H1 (cell line): ENCODE measurements at regions of chr19 and their contacts with region 1.

Region 1: GRCh38 chr19:4909897-4910593 is 744 bp downstream of the UHRF1 start:
- DNase-seq: peak; percentile 64 to 92
- H3K4me3 ChIP-seq: peak overlapping the region; percentile 46 to 83 (median 56)
- H3K27ac ChIP-seq: no peak overlapping the region; the same call in 1 of the 2 replicates
- H3K4me1 ChIP-seq: peaks cover 0 to 14% (median 11%) of the 10 kb centered on the region in 4 experiments; a peak in 6 of 7 replicates
- H3K27me3 ChIP-seq: no peaks in the 10 kb centered on the region; a peak in 2 of 7 replicates
- CTCF ChIP-seq: no peak
- EP300 ChIP-seq: no peak
- POLR2A ChIP-seq: no peak; a peak in 1 of 3 replicates
- RAD21 ChIP-seq: no peak

Region 2: GRCh38 chr19:4867534-4868285 is 42.3 kb before region 1 on chr19 and contains the start of gene PLIN3:
- CTCF ChIA-PET with region 1: interaction called, 111 read pairs
- POLR2A ChIA-PET with region 1: interaction called, 5 read pairs
- DNase-seq: peak; percentile 81 to 99
- H3K4me3 ChIP-seq: peak within 1 kb of the TSS; percentile 77 to 98 (median 84)
- H3K27ac ChIP-seq: peak within 1 kb of the TSS; percentile 46
- H3K4me1 ChIP-seq: peaks cover 0 to 5% (median 2%) of the 10 kb centered on the region in 4 experiments; a peak in 3 of 7 replicates
- H3K27me3 ChIP-seq: no peaks in the 10 kb centered on the region
- CTCF ChIP-seq: no peak
- EP300 ChIP-seq: no peak
- POLR2A ChIP-seq: no peak
- RAD21 ChIP-seq: no peak
- total RNA-seq, gene PLIN3: 60.7 and 68.1 TPM in 2 replicates

Region 3: GRCh38 chr19:4873930-4874329 is 36.1 kb before region 1 on chr19:
- CTCF ChIA-PET with region 1: interaction called, 111 read pairs
- POLR2A ChIA-PET with region 1: interaction called, 5 read pairs
- DNase-seq: no peak
- H3K4me3 ChIP-seq: no peak overlapping the region
- H3K27ac ChIP-seq: no peak overlapping the region
- H3K4me1 ChIP-seq: peaks cover 0 to 19% (median 15%) of the 10 kb centered on the region in 4 experiments; a peak in 6 of 7 replicates
- H3K27me3 ChIP-seq: no peaks in the 10 kb centered on the region; a peak in 1 of 7 replicates
- CTCF ChIP-seq: no peak
- EP300 ChIP-seq: no peak
- POLR2A ChIP-seq: no peak
- RAD21 ChIP-seq: no peak

Region 4: DNA sequence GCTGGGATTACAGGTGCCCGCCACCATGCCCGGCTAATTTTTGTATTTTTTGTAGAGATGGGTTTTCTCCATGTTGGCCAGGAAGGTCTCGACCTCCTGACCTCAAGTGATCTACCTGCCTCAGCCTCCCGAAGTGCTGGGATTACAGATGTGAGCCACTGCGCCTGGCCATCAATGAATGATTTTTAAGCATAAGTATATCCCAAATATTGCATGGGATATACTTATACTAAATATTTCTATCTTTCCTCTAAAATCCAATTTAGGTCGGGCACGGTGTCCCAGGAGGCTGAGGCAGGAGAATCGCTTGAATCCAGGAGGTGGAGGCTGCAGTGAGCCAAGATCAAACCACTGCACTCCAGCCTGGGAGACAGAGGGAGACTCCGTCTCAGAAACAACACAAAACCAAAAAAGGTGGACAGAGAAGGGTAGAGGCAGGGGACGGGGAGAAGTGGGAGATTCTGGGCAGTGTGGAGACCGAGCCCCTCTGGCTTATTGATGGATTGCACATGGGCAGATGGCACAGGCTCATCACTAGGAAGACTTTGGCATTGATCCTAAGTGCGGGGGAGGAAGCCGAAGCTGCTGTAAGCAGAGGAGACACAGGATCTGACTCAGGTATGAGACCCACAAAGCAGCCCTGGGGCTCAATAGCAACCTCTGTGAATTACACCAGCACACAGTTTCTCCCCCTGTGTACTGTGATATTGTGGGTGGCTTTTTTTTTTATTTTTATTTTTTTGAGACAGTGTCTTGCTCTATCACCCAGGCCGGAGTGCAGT is 20.8 kb before region 1 on chr19:
- CTCF ChIA-PET with region 1: interaction called, 13 read pairs
- POLR2A ChIA-PET with region 1: no interaction called
- DNase-seq: no peak
- H3K4me3 ChIP-seq: no peak overlapping the region
- H3K27ac ChIP-seq: no peak overlapping the region
- H3K4me1 ChIP-seq: no peaks in the 10 kb centered on the region
- H3K27me3 ChIP-seq: peaks cover 0 to 7% (median 4%) of the 10 kb centered on the region in 4 experiments; a peak in 4 of 7 replicates
- CTCF ChIP-seq: no peak
- EP300 ChIP-seq: no peak
- POLR2A ChIP-seq: no peak
- RAD21 ChIP-seq: no peak

Region 5: DNA sequence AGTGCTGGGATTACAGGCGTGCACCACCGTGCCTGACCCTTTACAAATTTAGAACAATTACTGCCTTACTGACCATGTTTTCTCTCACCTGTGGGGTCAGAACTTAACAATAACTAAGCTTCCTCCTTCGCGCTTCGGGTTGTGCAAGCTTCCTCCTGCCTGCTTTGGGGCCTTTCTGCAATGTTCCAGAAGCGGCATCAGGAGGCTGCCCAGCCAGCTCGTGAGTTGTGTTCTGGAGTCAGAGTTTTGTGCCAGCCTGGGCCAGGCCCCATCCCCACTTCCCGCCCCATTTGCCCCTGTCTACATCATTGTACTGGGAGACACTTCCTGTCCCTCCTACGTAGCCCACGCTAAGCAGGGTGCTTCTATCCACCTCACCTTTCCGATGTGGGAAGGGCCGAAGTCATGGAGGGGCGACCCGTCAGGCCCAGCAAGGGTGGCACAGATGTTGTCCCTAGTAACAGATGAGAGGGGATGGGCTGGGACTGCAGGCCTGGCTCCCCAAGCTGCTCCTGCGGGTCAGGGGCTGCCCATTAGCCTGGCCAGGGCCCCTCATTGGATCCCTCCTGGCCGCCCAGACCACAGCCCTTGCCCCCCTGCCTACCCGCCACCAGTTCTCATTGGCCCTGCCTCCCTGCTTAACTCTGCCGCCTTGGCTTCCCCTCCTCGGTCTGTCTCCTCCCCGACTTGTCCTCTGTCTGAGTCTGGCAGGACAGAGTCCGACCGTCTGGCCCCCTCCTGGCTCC is 12.7 kb after region 1 on chr19:
- CTCF ChIA-PET with region 1: interaction called, 12 read pairs
- POLR2A ChIA-PET with region 1: interaction called, 6 read pairs
- DNase-seq: no peak
- H3K4me3 ChIP-seq: no peak overlapping the region
- H3K27ac ChIP-seq: no peak overlapping the region; the same call in 1 of the 2 replicates
- H3K4me1 ChIP-seq: peaks cover 0 to 3% (median under 1%) of the 10 kb centered on the region in 4 experiments; a peak in 1 of 7 replicates
- H3K27me3 ChIP-seq: no peaks in the 10 kb centered on the region
- CTCF ChIP-seq: no peak
- EP300 ChIP-seq: no peak
- POLR2A ChIP-seq: no peak
- RAD21 ChIP-seq: no peak

Region 6: GRCh38 chr19:4933528-4933927 is 23.5 kb after region 1 on chr19:
- CTCF ChIA-PET with region 1: interaction called, 14 read pairs
- POLR2A ChIA-PET with region 1: no interaction called
- DNase-seq: no peak
- H3K4me3 ChIP-seq: no peak overlapping the region
- H3K27ac ChIP-seq: no peak overlapping the region
- H3K4me1 ChIP-seq: peaks cover 0 to under 1% (median 0%) of the 10 kb centered on the region in 4 experiments; a peak in 2 of 7 replicates
- H3K27me3 ChIP-seq: no peaks in the 10 kb centered on the region
- CTCF ChIP-seq: no peak
- EP300 ChIP-seq: no peak
- POLR2A ChIP-seq: no peak
- RAD21 ChIP-seq: no peak